Right cardiac atrium (tissue), 5 donors: ENCODE measurements at regions of chr11 and their contacts with region 1.

Region 1: DNA sequence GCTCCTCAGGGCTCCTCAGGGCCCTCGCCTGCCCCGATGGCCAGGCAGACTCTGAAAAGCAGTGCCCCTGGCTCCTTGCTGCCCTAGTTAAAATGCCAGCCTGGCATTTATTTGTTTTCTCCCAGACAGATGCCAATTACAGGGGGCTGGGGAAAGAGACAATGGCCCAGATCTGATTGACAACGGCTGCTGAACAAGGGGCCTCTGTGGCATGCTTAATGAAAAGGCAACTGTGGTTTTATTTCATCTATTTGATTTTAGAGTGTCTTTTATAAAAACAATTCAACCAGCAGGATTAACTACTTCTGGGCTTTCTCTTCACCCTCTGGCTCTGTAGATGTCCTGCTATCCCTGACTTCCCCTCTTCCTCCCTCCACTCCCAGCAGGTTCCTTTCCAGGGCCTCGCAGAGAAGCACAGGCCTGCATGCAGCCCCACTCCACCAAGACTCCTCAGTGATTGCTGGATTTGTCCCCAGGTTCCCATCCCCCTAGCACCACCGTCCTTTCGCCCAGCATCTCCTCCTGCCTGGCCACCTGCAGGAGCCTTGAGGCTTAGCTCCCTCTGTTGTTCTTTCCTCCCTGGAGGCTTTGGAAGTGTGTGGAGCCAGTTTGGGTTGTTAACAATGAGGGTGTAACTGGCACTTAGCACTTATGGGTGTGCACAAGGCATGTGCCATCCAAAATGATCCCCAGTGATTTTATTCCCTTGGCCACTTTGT is 171.1 kb downstream of the TENM4 start:
- DNase-seq: no peak
- ATAC-seq: no peak
- H3K4me3 ChIP-seq: no peak overlapping the region
- H3K27ac ChIP-seq: no peak overlapping the region
- H3K4me1 ChIP-seq: no peaks in the 10 kb centered on the region
- H3K27me3 ChIP-seq: no peaks in the 10 kb centered on the region

Region 2: GRCh38 chr11:79321263-79321662 is 51.5 kb after region 1 on chr11:
- intact Hi-C with region 1: loop called in 1 of 4 experiments (anchors 5 kb)
- DNase-seq: no peak
- ATAC-seq: no peak
- H3K4me3 ChIP-seq: no peak overlapping the region
- H3K27ac ChIP-seq: no peak overlapping the region
- H3K4me1 ChIP-seq: no peaks in the 10 kb centered on the region
- H3K27me3 ChIP-seq: no peaks in the 10 kb centered on the region

Region 3: GRCh38 chr11:79896258-79896657 is 626.5 kb after region 1 on chr11:
- intact Hi-C with region 1: no loop called
- DNase-seq: no peak
- ATAC-seq: no peak
- H3K4me3 ChIP-seq: no peak overlapping the region
- H3K27ac ChIP-seq: no peak overlapping the region
- H3K4me1 ChIP-seq: no peaks in the 10 kb centered on the region
- H3K27me3 ChIP-seq: no peaks in the 10 kb centered on the region